H1 (cell line): ENCODE measurements at regions of chr11 and their contacts with region 1.

Region 1: DNA sequence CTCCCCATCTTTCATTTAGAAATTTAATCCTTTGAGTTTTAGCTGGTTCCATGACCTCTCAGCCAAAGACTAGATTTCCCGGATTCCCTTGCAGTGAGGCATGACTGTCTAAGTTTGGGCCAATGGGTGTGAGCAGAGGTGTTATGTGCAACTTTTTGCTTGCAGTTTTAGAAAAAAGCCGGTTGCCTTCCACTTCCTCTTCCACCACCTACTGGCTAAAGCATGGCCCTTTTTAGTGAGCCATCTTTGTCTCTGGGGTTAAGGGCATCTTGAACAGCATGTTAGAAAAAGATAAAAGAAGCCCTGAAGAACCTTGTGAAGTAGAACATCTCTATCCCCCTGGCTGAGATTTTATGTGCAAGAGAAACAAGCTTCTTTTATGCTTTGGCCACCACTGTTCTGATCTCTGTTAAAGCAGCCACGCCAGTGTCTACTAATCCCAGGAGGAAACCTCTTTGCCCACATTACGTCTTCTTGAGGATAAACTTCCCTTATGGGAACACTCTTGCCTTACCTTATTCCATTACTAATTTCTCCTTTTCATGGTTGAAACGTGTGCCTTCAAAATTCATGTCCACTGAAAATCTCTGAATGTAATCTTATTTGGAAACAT is 279.9 kb downstream of the TENM4 start:
- DNase-seq: no peak
- H3K4me3 ChIP-seq: no peak overlapping the region
- H3K27ac ChIP-seq: no peak overlapping the region
- H3K4me1 ChIP-seq: no peaks in the 10 kb centered on the region
- H3K27me3 ChIP-seq: no peaks in the 10 kb centered on the region
- CTCF ChIP-seq: peak in 2 of 3 experiments; percentile 47 to 53; a peak in 3 of 4 replicates
- EP300 ChIP-seq: no peak
- POLR2A ChIP-seq: no peak
- RAD21 ChIP-seq: peak; percentile 49 to 61; a peak in 3 of 4 replicates

Region 2: DNA sequence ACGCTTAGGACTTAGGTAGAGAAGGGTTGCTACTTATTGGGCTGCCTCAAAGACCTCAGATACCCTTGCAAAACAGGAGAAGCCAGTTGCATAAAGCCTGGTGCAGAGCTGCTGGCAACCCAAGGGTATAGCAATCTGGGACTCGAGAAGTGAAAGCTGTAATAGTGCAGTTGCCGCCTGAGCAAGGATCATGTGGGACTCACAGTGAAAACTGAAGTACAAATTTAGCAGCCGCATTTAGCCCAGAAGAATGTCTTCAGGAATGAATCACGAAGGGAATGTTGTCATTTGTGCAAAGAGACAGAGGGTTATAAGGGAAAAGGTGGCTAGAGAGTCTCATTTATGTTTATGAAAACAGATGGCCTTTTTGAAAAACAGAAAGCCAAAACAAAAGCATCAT is 12.7 kb after region 1 on chr11:
- CTCF ChIA-PET with region 1: interaction called, 17 read pairs
- POLR2A ChIA-PET with region 1: no interaction called
- DNase-seq: no peak
- H3K4me3 ChIP-seq: no peak overlapping the region
- H3K27ac ChIP-seq: no peak overlapping the region
- H3K4me1 ChIP-seq: peaks cover 0 to 9% (median 5%) of the 10 kb centered on the region in 4 experiments; a peak in 3 of 7 replicates
- H3K27me3 ChIP-seq: no peaks in the 10 kb centered on the region
- CTCF ChIP-seq: no peak
- EP300 ChIP-seq: no peak
- POLR2A ChIP-seq: no peak
- RAD21 ChIP-seq: no peak

Region 3: DNA sequence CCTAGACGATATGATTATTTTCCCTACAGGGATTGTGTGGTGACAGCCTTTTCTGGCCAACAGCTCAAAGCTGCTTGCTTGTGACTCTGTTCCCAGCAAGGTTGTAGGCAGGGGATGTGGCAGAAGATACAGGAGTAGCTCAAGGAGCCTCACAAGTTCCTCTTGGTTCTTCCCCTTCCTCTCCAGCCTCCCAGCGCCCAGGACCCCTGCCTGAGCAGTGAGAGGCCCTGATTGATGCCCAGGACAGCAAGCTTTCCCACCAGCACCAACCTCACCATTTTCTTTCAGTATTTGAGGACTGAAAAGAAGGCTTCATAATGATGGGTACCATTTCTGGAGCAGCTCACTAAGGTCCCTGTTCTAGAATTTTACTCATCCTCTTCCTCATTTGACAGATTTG is 31.9 kb after region 1 on chr11:
- CTCF ChIA-PET with region 1: no interaction called
- POLR2A ChIA-PET with region 1: no interaction called
- DNase-seq: no peak
- H3K4me3 ChIP-seq: no peak overlapping the region
- H3K27ac ChIP-seq: no peak overlapping the region
- H3K4me1 ChIP-seq: no peaks in the 10 kb centered on the region
- H3K27me3 ChIP-seq: no peaks in the 10 kb centered on the region
- CTCF ChIP-seq: no peak
- EP300 ChIP-seq: no peak
- POLR2A ChIP-seq: no peak
- RAD21 ChIP-seq: no peak

Region 4: DNA sequence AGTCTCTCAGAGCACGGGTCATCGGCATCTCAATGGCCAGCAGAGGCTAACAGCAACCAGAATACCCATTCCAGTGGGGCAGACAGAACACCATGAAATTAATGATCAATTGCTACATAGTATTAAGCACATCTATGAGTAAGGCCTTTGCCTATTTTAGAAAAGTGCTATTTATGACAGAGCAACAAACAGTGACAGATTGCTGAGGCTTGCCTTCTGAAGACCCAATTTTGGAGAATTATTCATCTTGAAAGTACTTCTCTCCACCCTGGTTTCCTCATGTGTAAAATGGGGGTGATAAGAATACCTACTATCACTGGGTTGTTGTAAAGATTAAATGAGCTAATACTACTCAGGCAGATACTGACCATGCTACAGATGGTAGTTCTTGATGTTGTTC is 47.2 kb after region 1 on chr11:
- CTCF ChIA-PET with region 1: no interaction called
- POLR2A ChIA-PET with region 1: no interaction called
- DNase-seq: no peak
- H3K4me3 ChIP-seq: no peak overlapping the region
- H3K27ac ChIP-seq: no peak overlapping the region
- H3K4me1 ChIP-seq: peaks cover 0 to 2% (median 0%) of the 10 kb centered on the region in 4 experiments; a peak in 1 of 7 replicates
- H3K27me3 ChIP-seq: no peaks in the 10 kb centered on the region
- CTCF ChIP-seq: no peak
- EP300 ChIP-seq: no peak
- POLR2A ChIP-seq: no peak
- RAD21 ChIP-seq: no peak